Calu3 (cell line): ENCODE measurements at regions of chr12 and their contacts with region 1.

Region 1: DNA sequence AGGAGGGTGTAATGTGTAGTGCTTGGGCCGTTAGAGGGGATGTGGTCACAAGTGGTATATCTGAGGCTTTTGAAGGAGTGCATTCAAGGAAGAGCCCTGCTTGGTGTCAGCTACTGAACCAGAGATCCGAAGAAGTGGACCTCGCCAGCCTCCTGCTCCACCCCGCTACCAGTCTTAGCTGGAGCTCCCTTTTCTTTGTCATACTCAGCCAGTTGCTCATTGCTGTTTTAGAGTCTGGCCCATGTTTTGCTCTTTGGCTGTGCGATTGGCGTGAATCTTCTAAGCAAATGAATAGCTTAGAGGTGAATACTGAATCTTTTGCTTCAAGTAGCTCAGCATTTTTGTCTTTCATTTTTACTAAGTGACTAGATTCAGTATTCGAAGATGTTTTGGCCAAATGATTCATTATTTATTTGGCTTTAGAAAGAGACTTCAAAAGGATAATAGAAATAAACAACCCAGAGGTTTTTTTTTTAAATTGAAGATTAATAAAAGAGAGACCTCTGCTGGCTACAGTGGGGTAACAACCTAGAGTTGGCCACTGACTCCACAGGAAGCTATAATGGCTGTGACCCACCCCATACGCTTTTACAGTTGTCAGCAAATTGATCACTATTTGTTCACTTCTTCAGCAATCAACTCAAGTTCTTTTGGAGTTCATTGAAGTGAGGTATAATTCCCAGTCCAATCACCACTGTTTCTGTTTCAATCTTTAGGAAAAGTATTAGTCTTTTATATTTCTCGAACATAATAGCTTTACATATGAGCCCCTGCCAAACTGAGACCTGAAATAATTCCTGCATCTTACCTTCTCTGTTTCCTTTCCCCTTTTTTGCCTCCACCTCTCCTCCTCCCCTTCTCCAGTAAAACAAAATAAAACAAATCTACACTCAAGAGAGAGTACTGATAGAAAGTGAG is 19.9 kb downstream of the CDKN1B start:
- DNase-seq: no peak
- H3K4me3 Mint-ChIP-seq: no peak overlapping the region
- H3K27ac Mint-ChIP-seq: no peak overlapping the region
- H3K4me1 Mint-ChIP-seq: peaks cover 48% of the 10 kb centered on the region
- H3K27me3 Mint-ChIP-seq: no peaks in the 10 kb centered on the region
- CTCF ChIP-seq: no peak

Region 2: DNA sequence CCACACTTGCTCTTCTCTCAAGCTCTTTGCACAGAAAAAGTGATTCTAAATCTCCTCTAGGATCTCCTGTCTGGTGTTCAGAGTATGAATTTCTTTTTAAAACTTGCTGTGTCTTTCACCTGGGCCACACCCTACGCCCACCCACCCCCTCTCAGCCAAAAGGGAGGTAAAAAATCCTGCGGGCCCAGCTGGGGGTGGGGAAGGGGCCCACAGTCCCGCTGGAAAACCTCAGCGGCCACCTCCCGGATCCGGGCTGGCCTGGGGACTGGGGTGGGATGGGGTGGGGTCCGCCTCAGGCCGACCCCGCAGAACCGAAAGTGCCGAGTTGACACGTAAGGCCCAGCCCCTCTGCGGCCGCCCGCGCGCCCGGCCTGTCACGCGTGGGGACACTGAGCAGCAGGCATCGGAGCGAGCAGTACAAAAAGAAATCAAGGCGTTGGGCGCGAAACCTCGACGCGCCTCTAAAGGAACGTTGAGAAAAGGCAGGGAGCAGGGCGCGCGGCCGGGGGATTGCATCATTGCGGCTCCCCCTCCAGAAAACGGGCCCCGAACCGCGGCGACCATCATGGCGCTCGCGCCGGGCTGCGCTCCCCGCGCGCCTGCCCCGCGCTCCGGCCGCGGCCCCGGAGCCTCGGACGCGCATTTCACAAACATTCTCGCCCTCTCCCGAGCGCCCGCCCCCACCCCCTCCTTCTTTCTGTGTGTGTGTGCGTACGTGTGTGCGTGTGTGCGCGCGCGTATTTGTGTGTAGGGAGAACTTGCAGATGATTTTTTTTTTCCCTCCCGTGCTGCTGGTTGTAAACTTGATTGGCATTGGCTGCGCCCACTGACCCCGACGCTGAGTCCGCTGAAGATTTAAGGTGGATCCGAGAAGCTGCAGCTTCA is 12.1 kb before region 1 on chr12:
- CTCF ChIA-PET with region 1: interaction called, 10 read pairs
- intact Hi-C with region 1: loop called (anchors 1 kb)
- DNase-seq: no peak
- H3K4me3 Mint-ChIP-seq: peak overlapping the region; percentile 99
- H3K27ac Mint-ChIP-seq: peak overlapping the region; percentile 98
- H3K4me1 Mint-ChIP-seq: peaks cover 26% of the 10 kb centered on the region
- H3K27me3 Mint-ChIP-seq: no peaks in the 10 kb centered on the region
- CTCF ChIP-seq: no peak

Region 3: GRCh38 chr12:12779529-12779928 is 42.5 kb after region 1 on chr12:
- CTCF ChIA-PET with region 1: no interaction called
- intact Hi-C with region 1: loop called (anchors 5 kb)
- DNase-seq: no peak
- H3K4me3 Mint-ChIP-seq: no peak overlapping the region
- H3K27ac Mint-ChIP-seq: peak overlapping the region; percentile 26
- H3K4me1 Mint-ChIP-seq: peaks cover 34% of the 10 kb centered on the region
- H3K27me3 Mint-ChIP-seq: no peaks in the 10 kb centered on the region
- CTCF ChIP-seq: no peak

Region 4: DNA sequence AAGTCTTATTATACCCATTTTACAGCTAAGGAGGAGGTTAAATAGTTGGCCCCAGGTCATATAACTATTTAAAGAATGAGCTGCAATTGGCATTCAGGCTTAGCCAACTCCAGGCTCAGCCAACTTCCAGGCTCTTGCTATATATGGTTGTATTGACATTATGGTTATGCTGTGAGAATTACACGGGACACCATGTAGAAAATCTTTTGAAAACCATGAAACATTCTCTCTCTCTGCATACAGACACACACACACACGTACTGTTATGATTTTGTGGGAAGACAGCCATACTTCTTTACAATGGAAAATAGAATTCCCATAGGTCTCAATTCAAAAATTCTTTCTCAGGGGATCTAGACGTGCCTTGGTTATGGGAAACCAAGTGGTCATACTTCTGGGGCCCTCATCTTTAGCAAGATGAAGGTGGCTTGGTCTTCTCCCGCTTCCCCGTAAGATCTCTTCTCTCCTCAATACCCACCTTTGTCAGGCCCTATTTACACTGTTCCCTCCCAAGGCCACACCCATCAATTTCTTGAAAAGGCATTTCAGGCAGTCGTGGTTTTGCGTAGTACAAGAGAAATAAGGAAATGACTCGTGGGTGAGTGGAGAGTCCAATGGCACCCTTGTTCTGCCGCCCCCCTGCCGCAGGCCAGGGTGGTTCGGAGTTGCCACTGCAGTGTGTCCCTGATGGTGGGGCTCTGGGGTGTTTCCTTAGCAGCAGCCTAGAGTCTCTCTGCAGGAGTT is 144.3 kb after region 1 on chr12:
- CTCF ChIA-PET with region 1: no interaction called
- intact Hi-C with region 1: no loop called
- DNase-seq: peak; percentile 81
- H3K4me3 Mint-ChIP-seq: peak overlapping the region; percentile 65
- H3K27ac Mint-ChIP-seq: peak overlapping the region; percentile 92
- H3K4me1 Mint-ChIP-seq: peaks cover 93% of the 10 kb centered on the region
- H3K27me3 Mint-ChIP-seq: no peaks in the 10 kb centered on the region
- CTCF ChIP-seq: no peak

Region 5: DNA sequence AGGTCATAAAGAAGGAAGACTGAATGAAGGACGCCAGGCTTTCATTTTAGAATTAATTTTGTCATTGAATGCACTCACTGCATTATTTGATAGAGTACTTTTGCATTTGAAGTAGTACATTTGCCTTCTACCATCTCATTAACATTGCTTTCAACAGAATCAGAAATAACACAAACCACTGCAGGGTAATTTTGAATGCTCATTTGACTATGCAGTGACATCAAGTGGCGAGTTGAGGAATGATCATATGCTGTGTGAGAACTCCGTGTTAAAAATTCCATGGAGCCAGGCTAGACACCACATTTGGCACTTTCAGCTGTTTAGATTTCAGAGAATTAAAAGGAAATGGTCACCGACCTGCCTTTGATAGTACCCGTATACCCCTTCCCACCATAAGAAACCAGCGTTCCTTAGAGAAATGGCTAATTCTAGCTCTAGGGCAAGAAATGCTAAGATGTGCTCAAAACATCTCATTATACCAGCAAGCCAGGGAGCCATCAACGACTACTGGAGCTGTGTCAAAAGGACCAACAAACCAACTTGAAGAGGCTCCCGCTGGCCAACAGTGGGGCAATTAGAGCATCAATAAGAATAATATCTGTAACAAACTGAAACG is 246.5 kb after region 1 on chr12:
- CTCF ChIA-PET with region 1: no interaction called
- intact Hi-C with region 1: no loop called
- DNase-seq: peak; percentile 32
- H3K4me3 Mint-ChIP-seq: no peak overlapping the region
- H3K27ac Mint-ChIP-seq: no peak overlapping the region
- H3K4me1 Mint-ChIP-seq: no peaks in the 10 kb centered on the region
- H3K27me3 Mint-ChIP-seq: no peaks in the 10 kb centered on the region
- CTCF ChIP-seq: peak; percentile 25